ENCODE measurements at regions of chrX and their contacts with region 1.

Region 1: DNA sequence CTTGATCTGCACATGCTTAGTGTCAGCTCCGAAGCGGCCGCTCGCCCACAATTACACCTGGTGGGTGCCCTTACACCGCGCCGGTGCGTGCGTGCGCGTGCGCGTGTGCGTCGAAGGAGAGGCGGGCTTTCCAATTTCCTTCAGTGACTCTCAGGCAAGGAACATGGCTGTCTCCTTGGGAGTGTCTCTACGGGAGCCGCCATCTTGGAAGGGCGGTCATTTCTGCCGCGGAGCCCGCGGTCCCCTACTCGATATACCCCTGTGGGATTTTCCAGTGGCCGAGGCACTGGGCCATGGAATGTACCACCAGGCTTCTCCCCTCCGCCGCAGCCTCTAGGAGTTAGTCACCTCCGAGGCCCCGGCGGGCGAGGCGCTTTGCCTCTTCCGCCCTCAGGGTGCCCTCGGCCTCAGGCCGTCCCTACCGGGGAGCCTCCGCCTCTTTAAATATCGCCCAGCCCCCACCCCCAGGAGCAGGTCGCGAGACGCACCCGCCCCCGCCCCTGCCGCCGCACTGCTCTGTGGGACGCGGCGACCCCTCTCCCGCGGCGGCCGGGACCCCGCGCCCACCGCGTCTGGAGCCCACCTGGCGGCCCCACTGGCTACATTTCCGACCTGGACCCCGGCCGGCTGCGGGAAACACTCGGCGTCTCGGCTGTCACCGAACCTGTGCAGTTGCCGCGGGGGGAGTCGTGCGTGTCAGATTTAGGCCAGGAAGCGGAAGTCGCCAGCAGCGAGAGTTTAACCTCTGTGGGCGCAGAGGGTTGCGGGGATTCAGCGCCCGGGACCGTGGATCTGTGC is at the start of gene ZNF41:
- DNase-seq: peak; percentile 63
- H3K4me3 Mint-ChIP-seq: peak within 1 kb of the TSS; percentile 92
- H3K27ac Mint-ChIP-seq: peak within 1 kb of the TSS; percentile 91
- H3K4me1 Mint-ChIP-seq: peaks cover 26% of the 10 kb centered on the region
- H3K27me3 Mint-ChIP-seq: no peaks in the 10 kb centered on the region
- total RNA-seq, gene ZNF41: 10.7 and 10.9 TPM in 2 replicates

Region 2: DNA sequence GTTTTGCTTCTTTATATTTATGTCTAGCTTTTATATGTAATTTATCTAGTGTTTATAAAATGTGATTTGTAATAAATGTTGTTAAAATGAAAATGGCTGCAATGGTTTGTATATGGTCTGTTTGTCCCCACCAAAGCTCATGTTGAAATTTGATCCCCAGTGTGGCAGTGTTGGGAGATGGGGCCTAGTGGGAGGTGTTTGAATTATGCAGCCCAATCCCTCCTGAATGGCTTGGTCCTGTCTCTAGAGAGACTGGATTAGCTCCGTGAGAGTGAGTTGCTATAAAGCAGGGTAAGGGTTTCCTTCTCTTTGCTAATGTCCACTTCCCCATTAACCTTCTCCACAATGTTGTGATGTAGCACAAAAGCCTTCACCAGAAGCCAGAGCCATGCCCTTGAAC is 600.4 kb before region 1 on chrX:
- intact Hi-C with region 1: no loop called
- DNase-seq: no peak
- H3K4me3 Mint-ChIP-seq: no peak overlapping the region
- H3K27ac Mint-ChIP-seq: no peak overlapping the region
- H3K4me1 Mint-ChIP-seq: no peaks in the 10 kb centered on the region
- H3K27me3 Mint-ChIP-seq: no peaks in the 10 kb centered on the region

Region 3: DNA sequence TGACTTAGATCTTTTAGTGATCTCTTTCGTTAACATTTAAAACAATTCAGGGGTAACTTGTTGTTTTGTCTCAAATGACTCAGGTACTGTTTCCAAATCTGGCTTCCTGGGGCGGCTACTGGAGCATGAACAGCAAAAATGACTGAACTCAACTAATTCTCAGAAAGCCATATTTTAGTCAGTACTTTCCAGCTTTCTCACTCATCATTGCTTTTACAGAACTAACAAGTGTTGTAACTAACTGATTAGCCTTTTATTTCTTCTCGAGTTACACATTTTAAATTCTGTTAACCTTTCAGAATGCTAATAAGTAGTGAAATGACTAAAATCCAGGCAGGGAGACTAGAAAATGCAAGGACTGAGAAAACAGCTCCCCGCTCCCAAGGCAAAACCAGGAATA is 515.2 kb before region 1 on chrX:
- intact Hi-C with region 1: no loop called
- DNase-seq: no peak
- H3K4me3 Mint-ChIP-seq: no peak overlapping the region
- H3K27ac Mint-ChIP-seq: peak overlapping the region; percentile 35
- H3K4me1 Mint-ChIP-seq: peaks cover 10% of the 10 kb centered on the region
- H3K27me3 Mint-ChIP-seq: peaks cover 2% of the 10 kb centered on the region

Region 4: DNA sequence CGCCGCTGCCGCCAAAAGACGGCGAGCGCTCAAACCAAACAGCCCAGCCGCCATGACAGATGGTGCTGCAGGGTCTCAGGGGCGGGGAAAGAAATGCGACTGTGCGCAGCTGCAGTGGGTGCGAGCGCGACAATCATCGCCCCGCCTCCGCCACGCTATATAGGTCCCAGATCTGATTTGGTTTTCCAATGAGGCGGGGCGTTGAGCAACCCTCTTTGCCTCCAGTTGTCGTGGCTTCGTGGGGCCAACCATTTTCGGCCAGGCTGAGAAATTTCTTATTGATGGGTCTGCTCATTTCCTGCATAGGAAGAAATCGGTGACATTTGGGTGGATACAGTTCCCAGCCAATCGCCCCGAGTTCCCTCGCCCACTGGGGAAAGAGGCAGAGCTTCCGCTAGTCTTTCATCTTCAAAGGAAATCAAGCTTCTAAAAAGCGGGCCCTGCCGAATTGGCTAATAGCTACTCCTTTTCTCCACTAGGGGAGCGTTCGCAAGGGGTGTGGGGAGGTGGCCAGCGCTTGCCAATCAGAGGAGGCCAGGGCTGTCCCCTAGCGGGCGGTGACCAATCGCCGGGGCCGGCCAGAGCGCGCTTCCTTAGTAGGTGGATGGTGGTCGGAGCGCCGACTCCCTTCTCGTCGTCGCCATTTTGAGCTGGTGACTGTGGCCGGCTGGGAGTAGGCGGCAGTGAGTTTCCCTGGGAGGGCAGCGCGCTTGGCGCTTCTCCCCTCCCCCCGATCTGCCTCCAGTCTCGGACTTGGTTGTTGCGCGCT is 337.9 kb before region 1 on chrX and contains the starts of genes NDUFB11 and RBM10:
- intact Hi-C with region 1: loop called (anchors 1 kb)
- DNase-seq: peak; percentile 89
- H3K4me3 Mint-ChIP-seq: peak within 1 kb of the TSS; percentile 100
- H3K27ac Mint-ChIP-seq: peak within 1 kb of the TSS; percentile 100
- H3K4me1 Mint-ChIP-seq: peaks cover 18% of the 10 kb centered on the region
- H3K27me3 Mint-ChIP-seq: peaks cover 2% of the 10 kb centered on the region
- total RNA-seq, gene NDUFB11: 84.5 and 88.7 TPM in 2 replicates
- total RNA-seq, gene RBM10: 62.0 and 64.1 TPM in 2 replicates

Region 5: DNA sequence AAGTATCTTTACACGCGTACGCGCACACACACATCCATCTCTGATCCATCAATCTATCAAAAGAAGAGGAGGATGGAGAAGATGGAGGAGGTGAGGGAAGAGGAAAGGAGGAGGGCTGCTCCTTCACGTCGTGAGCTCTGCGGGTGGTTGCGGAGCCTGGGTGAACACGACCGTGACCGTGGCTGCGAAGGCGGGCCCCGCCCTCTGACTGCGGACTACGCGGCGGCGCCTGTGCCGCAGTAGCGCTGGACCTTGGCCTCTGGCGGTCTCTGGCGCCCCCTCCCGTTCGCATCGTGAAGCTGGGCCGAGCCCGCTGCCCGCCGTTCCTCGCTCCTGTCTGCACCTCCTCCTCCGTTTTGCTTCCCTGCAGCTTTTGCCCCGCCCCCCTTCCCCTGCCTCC is 40.6 kb after region 1 on chrX:
- intact Hi-C with region 1: loop called (anchors 5 kb)
- DNase-seq: peak; percentile 69
- H3K4me3 Mint-ChIP-seq: peak overlapping the region; percentile 70
- H3K27ac Mint-ChIP-seq: no peak overlapping the region
- H3K4me1 Mint-ChIP-seq: no peaks in the 10 kb centered on the region
- H3K27me3 Mint-ChIP-seq: no peaks in the 10 kb centered on the region

Region 6: GRCh38 chrX:47697191-47697590 is 214.5 kb after region 1 on chrX:
- intact Hi-C with region 1: no loop called
- DNase-seq: no peak
- H3K4me3 Mint-ChIP-seq: no peak overlapping the region
- H3K27ac Mint-ChIP-seq: no peak overlapping the region
- H3K4me1 Mint-ChIP-seq: no peaks in the 10 kb centered on the region
- H3K27me3 Mint-ChIP-seq: peaks cover 2% of the 10 kb centered on the region

Region 7: DNA sequence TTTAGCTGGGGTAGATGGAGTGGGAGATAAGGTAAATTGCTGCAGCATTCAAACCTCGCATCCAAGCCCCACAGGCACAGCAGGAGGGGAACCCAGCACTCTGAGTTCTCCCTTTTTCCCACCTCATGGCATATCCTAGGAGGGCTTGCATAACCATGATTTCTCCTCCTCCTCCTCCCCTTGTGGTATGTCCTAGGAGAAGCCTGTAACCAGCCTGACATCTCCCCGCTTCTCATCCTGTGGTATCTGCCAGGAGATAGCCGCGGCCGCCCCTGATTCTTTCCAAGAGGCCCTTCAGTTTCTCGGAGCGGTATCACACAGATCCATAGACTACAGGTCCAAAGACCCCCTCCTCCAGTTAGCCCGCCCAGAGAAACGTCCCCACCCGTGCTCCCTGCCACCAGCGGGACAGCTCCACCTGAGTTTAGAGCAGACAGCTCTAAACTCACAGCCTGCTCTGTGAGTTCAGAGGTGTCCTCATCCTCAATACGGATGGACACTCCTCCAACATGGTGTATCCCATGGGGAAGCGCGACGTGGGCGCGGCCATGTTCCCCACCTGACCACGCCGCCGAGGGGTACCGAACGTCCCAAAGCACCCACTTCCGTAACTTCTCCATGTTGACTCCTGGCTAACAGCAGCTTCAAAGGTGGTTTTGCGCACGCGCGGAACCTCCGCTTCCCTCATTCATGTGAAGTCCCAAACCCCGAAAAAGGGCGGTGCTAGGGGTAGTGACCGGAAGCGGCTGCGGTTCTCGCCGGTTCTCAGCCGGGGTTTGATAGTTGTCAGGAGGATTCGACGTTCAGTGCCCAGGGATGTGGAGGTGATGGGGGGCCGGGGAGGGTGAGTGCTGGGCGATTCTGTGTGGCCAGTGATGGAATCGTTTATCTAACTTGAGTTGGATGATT is 353.7 kb after region 1 on chrX and contains the start of gene ZNF81:
- intact Hi-C with region 1: loop called (anchors 1 kb)
- DNase-seq: peak; percentile 87
- H3K4me3 Mint-ChIP-seq: peak within 1 kb of the TSS; percentile 98
- H3K27ac Mint-ChIP-seq: peak within 1 kb of the TSS; percentile 97
- H3K4me1 Mint-ChIP-seq: peaks cover 13% of the 10 kb centered on the region
- H3K27me3 Mint-ChIP-seq: no peaks in the 10 kb centered on the region
- total RNA-seq, gene ZNF81: 5.9 and 9.2 TPM in 2 replicates

Region 8: DNA sequence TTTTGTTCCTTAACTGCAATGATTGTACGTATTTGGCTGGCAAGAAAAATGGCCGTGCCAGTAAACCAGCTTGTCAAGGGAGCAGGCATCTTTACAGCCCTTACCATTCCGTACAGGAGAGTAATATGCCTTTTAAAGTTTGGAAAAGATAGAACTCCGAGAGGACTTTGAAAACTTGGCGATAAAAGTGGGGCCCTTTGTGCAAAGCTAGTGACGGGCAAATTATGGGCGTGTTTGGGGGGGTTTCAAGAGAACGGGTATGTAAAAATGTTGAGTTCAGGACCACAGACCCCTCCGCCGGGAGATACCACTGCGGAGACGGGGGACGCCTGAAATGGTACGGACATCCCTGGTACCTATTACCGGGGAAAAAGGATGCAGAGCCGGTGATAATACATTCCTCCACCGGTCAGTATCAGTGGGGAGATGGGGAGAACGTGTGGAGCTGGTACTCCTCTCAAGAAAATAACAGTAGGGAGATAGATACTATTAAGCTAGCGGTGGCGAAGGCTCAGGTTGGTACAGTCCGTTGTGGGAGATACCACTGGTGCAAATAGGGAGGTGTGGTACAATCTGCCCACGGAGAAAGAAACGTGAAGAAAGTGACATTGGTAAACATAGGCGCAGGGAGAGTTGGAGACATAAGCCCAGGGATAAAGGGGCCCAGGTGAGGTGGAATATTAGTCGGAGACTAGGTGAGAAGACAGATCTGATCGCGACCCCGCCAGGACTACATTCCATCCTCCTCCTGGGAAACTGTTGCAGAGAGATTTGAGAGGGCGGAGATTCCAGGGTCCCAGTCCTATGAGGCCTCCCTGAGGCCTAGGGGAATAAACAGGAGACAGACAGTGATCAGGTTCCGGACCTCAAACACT is 538.6 kb after region 1 on chrX:
- intact Hi-C with region 1: loop called (anchors 5 kb)
- DNase-seq: peak; percentile 54
- H3K4me3 Mint-ChIP-seq: peak overlapping the region; percentile 92
- H3K27ac Mint-ChIP-seq: peak overlapping the region; percentile 97
- H3K4me1 Mint-ChIP-seq: peaks cover 6% of the 10 kb centered on the region
- H3K27me3 Mint-ChIP-seq: peaks cover 7% of the 10 kb centered on the region

Region 9: GRCh38 chrX:49163555-49164419 is 1681.1 kb after region 1 on chrX:
- intact Hi-C with region 1: loop called (anchors 10 kb)
- DNase-seq: peak; percentile 77
- H3K4me3 Mint-ChIP-seq: peak overlapping the region; percentile 69
- H3K27ac Mint-ChIP-seq: peak overlapping the region; percentile 72
- H3K4me1 Mint-ChIP-seq: peaks cover 23% of the 10 kb centered on the region
- H3K27me3 Mint-ChIP-seq: peaks cover 4% of the 10 kb centered on the region